ENCODE measurements at regions of chr19 and their contacts with region 1.

Region 1: GRCh38 chr19:53467485-53468262 is at the start of gene ZNF813:
- DNase-seq: peak; percentile 85 to 93 (median 89)
- H3K4me3 ChIP-seq: peak within 1 kb of the TSS; percentile 74 to 92 (median 86)
- H3K4me3 Mint-ChIP-seq: peak within 1 kb of the TSS; percentile 89 to 92
- H3K27ac ChIP-seq: peak within 1 kb of the TSS; percentile 65 to 86
- H3K27ac Mint-ChIP-seq: peak within 1 kb of the TSS; percentile 86 to 91 (median 89)
- H3K4me1 ChIP-seq: peaks cover 12 to 13% of the 10 kb centered on the region in 2 donors
- H3K4me1 Mint-ChIP-seq: peaks cover 20% of the 10 kb centered on the region
- H3K27me3 ChIP-seq: peaks cover 2 to 19% of the 10 kb centered on the region in 2 donors
- H3K27me3 Mint-ChIP-seq: peaks cover 17 to 31% (median 24%) of the 10 kb centered on the region in 3 donors
- CTCF ChIP-seq: no peak
- polyA plus RNA-seq, gene ZNF813: 0.32 to 1.9 (median 0.61) TPM

Region 2: DNA sequence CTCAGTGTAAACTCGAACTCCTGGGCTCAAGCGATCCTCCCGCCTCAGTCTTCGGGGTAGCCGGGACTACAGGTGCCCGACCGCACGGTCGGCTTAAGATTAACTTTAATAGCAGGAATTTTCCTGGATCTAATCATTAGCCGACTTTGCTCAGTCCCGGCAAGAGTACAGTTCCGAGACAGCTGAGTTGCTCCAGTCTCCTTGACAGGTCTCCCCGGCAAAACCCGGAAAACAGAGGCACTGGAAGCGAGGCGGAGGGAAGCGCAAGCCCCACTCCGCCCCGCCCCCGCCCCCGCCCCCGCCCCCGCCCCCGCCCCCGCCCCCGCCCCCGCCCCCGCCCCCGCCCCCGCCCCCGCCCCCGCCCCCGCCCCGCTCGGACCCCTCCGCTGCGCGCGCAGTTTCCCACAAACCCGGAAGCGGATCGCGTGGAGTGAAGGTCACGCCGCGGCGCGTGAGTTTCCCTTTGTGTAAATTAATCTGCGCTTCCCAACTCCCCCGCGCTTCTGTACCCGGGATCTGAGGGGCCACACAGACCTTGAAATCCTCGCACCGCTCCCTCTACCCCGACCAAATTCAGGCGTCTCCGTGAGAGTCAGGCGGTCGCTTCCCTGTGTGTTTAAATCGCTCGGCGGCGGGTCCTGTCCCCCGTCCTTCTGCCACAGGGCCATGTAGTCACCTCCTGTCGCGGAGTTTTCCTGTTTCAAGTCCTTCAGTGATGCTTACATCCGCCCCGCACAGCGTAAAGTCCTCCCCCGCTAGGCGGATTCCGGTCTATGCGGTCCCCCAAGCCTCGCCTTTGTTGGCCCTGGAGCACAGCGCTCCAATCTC is 1170.7 kb before region 1 on chr19 and contains the start of gene ZNF480:
- intact Hi-C with region 1: loop called (anchors 10 kb)
- DNase-seq: peak; percentile 80 to 86 (median 82)
- H3K4me3 ChIP-seq: peak within 1 kb of the TSS; percentile 93 to 99 (median 94)
- H3K4me3 Mint-ChIP-seq: peak within 1 kb of the TSS; percentile 95 to 97
- H3K27ac ChIP-seq: peak within 1 kb of the TSS; percentile 88 to 94
- H3K27ac Mint-ChIP-seq: peak within 1 kb of the TSS; percentile 91 to 98 (median 94)
- H3K4me1 ChIP-seq: peaks cover 15 to 18% of the 10 kb centered on the region in 2 donors
- H3K4me1 Mint-ChIP-seq: peaks cover 17% of the 10 kb centered on the region
- H3K27me3 ChIP-seq: no peaks in the 10 kb centered on the region
- H3K27me3 Mint-ChIP-seq: peaks cover 0 to 1% (median 0%) of the 10 kb centered on the region in 3 donors
- CTCF ChIP-seq: no peak
- polyA plus RNA-seq, gene ZNF480: 6.6 to 7.6 (median 7.4) TPM

Region 3: DNA sequence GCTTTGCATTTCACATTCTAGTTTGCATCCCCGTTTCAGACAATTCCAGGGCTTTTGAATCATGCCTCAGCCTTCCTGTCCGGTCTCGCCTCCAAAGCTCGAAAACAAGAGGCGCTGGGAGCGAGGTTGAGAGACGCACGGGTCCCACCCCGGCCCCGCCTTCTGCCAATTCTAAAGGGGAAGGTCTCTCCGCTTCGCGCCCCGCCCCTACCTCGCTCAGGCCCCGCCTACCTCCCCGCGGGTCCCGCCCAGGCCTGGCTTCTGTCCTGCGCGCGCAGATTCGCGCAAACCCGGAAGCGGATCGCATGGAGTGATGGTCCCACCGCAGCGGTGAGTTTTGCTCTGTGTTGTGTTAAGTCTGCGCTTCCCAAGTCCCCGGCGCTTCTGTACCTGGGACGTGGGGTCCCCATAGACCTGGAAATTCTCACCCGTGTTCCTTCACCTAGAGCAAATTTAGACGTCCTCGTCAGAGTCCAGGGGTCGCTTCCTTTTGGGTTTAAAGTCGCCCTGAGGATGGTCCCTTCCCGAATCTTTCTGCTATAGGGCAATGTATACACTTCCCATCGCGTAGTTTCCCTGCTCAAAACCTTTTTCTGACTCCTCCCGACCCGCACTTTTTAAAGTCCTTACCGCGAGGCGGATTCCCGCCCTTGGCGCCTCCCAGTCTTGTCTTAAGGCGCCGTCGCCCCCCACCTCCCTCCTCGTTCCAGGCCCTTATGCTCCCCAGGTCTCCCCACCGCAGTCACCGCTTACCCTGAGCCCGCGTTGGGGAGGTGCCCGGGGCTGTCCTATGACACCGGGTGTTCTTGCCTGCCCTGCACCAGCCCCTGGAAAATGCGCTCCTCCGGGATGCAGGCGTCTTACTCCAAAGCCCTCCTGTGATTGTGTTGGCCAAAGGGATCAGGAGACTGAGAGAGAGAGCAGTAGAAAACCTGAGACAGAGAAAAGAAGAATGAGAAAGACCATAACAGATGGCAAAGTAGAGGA is 133.9 kb before region 1 on chr19 and contains the start of gene ZNF845:
- intact Hi-C with region 1: loop called in 1 of 2 experiments (anchors 5 kb)
- DNase-seq: peak; percentile 80 to 82 (median 82)
- H3K4me3 ChIP-seq: peak within 1 kb of the TSS; percentile 72 to 91 (median 79)
- H3K4me3 Mint-ChIP-seq: peak within 1 kb of the TSS; percentile 97 to 99
- H3K27ac ChIP-seq: peak within 1 kb of the TSS; percentile 11 to 77
- H3K27ac Mint-ChIP-seq: peak within 1 kb of the TSS; percentile 84 to 91 (median 89)
- H3K4me1 ChIP-seq: peaks cover 16 to 17% of the 10 kb centered on the region in 2 donors
- H3K4me1 Mint-ChIP-seq: peaks cover 21% of the 10 kb centered on the region
- H3K27me3 ChIP-seq: no peaks in the 10 kb centered on the region
- H3K27me3 Mint-ChIP-seq: peaks cover 0 to 8% (median 0%) of the 10 kb centered on the region in 3 donors
- CTCF ChIP-seq: no peak
- polyA plus RNA-seq, gene ZNF845: 0.51 to 3.6 (median 2.6) TPM

Region 4: GRCh38 chr19:53394974-53395839 is 72.5 kb before region 1 on chr19 and contains the start of gene ZNF765:
- intact Hi-C with region 1: loop called in 1 of 2 experiments (anchors 5 kb)
- DNase-seq: peak; percentile 88 to 91 (median 90)
- H3K4me3 ChIP-seq: peak within 1 kb of the TSS; percentile 80 to 94 (median 81)
- H3K4me3 Mint-ChIP-seq: peak within 1 kb of the TSS; percentile 96 to 99
- H3K27ac ChIP-seq: peak within 1 kb of the TSS; percentile 53 to 81
- H3K27ac Mint-ChIP-seq: peak within 1 kb of the TSS; percentile 88 to 93 (median 90)
- H3K4me1 ChIP-seq: peaks cover 13 to 19% of the 10 kb centered on the region in 2 donors
- H3K4me1 Mint-ChIP-seq: peaks cover 21% of the 10 kb centered on the region
- H3K27me3 ChIP-seq: no peaks in the 10 kb centered on the region
- H3K27me3 Mint-ChIP-seq: peaks cover 0 to 4% (median 1%) of the 10 kb centered on the region in 3 donors
- CTCF ChIP-seq: peak; percentile 64
- polyA plus RNA-seq, gene ZNF765: 1.5 to 5.0 (median 3.4) TPM

Region 5: DNA sequence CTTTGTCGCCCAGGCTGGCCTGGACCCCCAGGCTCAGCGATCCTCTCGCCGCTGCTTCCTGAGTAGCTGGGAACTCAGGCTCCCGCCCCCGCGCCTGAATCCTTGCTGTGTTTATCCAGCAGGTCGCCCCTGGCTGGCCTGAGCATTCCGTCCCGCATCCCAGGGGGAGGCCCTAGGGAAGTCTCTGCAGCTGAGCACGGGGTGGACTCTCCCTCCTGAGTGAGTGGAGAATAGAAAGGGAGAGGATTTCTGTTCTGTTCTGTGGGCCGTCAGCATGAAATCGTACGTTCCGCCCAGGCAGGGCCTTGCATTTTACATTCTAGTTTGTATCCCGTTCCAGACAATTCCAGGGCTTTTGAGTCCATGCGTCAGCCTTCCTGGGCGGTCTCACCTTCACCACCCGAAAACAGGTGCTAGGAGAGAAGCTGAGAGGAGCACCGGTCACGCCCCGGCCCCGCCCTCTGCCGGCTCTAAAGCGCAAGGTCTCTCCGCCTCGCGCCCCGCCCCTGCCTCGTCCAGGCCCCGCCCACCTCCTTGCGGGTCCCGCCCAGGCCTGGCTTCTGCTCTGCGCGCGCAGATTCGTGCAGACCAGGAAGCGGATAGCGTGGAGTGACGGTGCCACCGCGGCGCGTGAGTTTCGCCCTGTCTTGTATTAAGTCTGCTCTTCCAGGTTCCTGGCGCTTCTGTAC is 36.1 kb before region 1 on chr19 and contains the start of gene ZNF761:
- intact Hi-C with region 1: loop called (anchors 2 to 5 kb)
- DNase-seq: peak; percentile 91 to 92 (median 92)
- H3K4me3 ChIP-seq: peak within 1 kb of the TSS; percentile 55 to 94 (median 91)
- H3K4me3 Mint-ChIP-seq: peak within 1 kb of the TSS; percentile 93 to 96
- H3K27ac ChIP-seq: peak within 1 kb of the TSS; percentile 66 to 93
- H3K27ac Mint-ChIP-seq: peak within 1 kb of the TSS; percentile 93 to 96 (median 94)
- H3K4me1 ChIP-seq: peaks cover 18 to 20% of the 10 kb centered on the region in 2 donors
- H3K4me1 Mint-ChIP-seq: peaks cover 19% of the 10 kb centered on the region
- H3K27me3 ChIP-seq: peaks cover 0 to 4% of the 10 kb centered on the region in 2 donors
- H3K27me3 Mint-ChIP-seq: peaks cover 1 to 9% (median 6%) of the 10 kb centered on the region in 3 donors
- CTCF ChIP-seq: peak; percentile 59
- polyA plus RNA-seq, gene ZNF761: 3.4 to 6.1 (median 5.6) TPM

Region 6: DNA sequence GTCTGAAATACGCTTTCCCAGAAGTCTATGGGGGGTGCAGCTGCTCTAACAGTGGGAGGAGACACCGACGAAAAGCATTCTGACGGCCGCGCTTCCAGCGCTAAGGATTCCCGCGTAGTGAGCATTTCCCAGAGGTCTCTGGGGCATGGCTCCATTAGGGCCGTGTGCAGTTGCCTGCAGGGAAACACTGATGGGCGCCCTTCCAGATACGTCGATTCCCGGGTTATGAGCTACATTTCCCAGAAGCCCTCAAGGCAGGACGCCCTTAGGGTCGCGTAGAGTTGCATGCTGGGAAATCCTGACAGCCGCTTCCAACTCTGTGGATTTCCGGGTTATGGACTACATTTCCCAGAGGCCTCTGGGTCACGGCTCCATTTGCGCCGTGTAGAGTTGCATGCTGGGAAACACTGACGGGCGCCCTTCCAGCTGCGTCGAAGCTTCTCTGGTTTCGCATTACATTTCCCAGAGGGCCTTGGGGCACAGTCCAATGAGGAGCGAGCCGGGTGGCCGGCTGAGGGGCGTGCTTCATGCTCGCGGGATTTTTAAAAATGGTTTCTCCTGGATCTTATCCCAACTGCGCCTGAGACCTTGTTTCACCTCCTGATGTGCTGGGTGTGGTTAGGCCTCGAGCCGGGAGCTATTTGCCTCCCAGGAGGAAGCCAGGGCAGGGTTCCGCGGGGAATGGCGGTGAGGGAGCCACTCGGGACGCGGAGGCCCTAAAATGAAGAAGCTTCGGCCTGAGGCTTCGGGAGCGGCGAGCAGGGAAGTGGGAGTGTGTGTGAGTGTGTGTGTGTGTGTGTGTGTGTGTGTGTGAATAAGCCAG is 53.1 kb after region 1 on chr19:
- intact Hi-C with region 1: loop called in 1 of 2 experiments (anchors 5 kb)
- DNase-seq: peak; percentile 91 to 92 (median 92)
- H3K4me3 ChIP-seq: peak overlapping the region; percentile 63 to 91 (median 72)
- H3K4me3 Mint-ChIP-seq: peak overlapping the region; percentile 92 to 96
- H3K27ac ChIP-seq: peak overlapping the region; percentile 71 to 82
- H3K27ac Mint-ChIP-seq: peak overlapping the region; percentile 83 to 93 (median 86)
- H3K4me1 ChIP-seq: peaks cover 16 to 17% of the 10 kb centered on the region in 2 donors
- H3K4me1 Mint-ChIP-seq: peaks cover 16% of the 10 kb centered on the region
- H3K27me3 ChIP-seq: no peaks in the 10 kb centered on the region
- H3K27me3 Mint-ChIP-seq: peaks cover 0 to 3% (median 1%) of the 10 kb centered on the region in 3 donors
- CTCF ChIP-seq: no peak

Region 7: GRCh38 chr19:53657781-53658180 is 190.1 kb after region 1 on chr19:
- intact Hi-C with region 1: no loop called
- DNase-seq: no peak
- H3K4me3 ChIP-seq: no peak overlapping the region
- H3K4me3 Mint-ChIP-seq: no peak overlapping the region
- H3K27ac ChIP-seq: no peak overlapping the region
- H3K27ac Mint-ChIP-seq: no peak overlapping the region
- H3K4me1 ChIP-seq: no peaks in the 10 kb centered on the region
- H3K4me1 Mint-ChIP-seq: no peaks in the 10 kb centered on the region
- H3K27me3 ChIP-seq: no peaks in the 10 kb centered on the region
- H3K27me3 Mint-ChIP-seq: peaks cover 0 to 4% (median 3%) of the 10 kb centered on the region in 3 donors
- CTCF ChIP-seq: no peak